Upper lobe of right lung (tissue), 1 donor: ENCODE measurements at regions of chr2 and their contacts with region 1.

Region 1: DNA sequence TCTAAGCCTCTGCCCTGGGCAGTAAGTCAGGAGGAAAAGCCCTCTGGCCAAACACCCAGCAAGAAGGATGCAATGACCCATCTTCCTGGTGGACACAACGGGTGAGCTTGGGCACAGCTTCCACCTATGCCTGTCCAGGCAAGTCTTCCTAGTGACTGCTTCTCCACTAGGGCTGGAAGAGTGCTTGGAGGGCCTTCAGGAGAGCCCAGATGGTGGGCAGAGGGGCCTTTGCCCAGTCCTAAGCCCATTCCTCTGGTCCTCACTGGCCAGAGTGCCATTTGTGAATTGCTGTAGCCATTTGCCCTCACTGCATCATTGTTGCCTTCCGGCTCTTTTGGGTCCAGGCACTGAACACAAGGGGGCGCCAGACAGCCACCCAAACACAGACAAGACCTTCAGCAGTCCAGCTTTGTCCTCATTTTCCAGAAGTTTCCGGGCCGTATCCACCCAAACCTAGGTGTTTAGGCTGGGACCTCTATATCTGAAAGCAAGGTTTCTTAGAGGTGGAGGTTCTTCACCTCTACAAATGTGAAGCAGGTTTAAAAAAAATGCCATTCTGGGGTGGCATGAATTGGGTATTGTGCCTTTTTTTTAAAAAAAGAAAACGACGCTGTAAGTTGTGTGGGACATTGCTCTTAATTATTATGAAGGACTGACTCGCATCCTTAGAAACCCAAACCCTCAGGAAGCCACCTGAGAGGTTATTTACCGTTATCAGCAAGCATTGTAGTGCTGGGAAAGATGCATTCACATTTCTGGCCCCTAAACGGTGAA is 29.5 kb downstream of the PAX8 start:
- DNase-seq: peak; percentile 88
- ATAC-seq: peak; percentile 91
- H3K4me3 ChIP-seq: no peak overlapping the region
- H3K27ac ChIP-seq: no peak overlapping the region
- H3K4me1 ChIP-seq: no peaks in the 10 kb centered on the region
- H3K27me3 ChIP-seq: no peaks in the 10 kb centered on the region
- CTCF ChIP-seq: peak; percentile 91

Region 2: DNA sequence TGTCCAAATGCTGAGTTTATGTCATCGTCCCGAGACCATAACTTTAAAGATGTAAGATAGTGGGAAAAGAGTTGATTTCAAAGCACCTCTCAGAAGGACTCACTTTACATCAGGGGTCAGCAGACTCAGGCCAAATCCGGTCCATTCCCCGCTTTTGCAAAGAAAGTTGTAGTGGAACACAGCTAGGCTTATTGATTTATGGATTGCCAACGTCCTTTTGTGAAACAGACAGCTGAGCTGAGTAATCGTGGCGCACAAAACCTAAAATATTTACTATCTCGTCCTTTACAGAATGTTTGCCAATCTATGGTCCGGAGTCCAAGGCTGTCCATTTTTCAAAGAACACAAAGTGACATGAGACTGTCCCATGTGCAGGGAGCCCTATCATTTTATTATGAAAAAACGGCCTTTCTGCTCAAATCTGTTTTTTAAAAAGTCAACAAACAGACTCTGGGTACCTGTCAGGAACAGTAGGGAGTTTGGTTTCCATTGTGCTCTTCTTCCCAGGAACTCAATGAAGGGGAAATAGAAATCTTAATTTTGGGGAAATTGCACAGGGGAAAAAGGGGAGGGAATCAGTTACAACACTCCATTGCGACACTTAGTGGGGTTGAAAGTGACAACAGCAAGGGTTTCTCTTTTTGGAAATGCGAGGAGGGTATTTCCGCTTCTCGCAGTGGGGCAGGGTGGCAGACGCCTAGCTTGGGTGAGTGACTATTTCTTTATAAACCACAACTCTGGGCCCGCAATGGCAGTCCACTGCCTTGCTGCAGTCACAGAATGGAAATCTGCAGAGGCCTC is 122.1 kb before region 1 on chr2 and contains the start of gene IL1RN:
- intact Hi-C with region 1: no loop called
- DNase-seq: no peak
- ATAC-seq: peak; percentile 75
- H3K4me3 ChIP-seq: peak within 1 kb of the TSS; percentile 29
- H3K27ac ChIP-seq: peak within 1 kb of the TSS; percentile 63
- H3K4me1 ChIP-seq: peaks cover 8% of the 10 kb centered on the region
- H3K27me3 ChIP-seq: no peaks in the 10 kb centered on the region
- CTCF ChIP-seq: no peak
- total RNA-seq, gene IL1RN: 41.7 TPM

Region 3: GRCh38 chr2:113370478-113371091 is 121.4 kb after region 1 on chr2:
- intact Hi-C with region 1: loop called (anchors 5 kb)
- DNase-seq: no peak
- ATAC-seq: peak; percentile 96
- H3K4me3 ChIP-seq: no peak overlapping the region
- H3K27ac ChIP-seq: no peak overlapping the region
- H3K4me1 ChIP-seq: peaks cover under 1% of the 10 kb centered on the region
- H3K27me3 ChIP-seq: no peaks in the 10 kb centered on the region
- CTCF ChIP-seq: peak; percentile 72